ENCODE measurements at regions of chr12 and their contacts with region 1.

Region 1: DNA sequence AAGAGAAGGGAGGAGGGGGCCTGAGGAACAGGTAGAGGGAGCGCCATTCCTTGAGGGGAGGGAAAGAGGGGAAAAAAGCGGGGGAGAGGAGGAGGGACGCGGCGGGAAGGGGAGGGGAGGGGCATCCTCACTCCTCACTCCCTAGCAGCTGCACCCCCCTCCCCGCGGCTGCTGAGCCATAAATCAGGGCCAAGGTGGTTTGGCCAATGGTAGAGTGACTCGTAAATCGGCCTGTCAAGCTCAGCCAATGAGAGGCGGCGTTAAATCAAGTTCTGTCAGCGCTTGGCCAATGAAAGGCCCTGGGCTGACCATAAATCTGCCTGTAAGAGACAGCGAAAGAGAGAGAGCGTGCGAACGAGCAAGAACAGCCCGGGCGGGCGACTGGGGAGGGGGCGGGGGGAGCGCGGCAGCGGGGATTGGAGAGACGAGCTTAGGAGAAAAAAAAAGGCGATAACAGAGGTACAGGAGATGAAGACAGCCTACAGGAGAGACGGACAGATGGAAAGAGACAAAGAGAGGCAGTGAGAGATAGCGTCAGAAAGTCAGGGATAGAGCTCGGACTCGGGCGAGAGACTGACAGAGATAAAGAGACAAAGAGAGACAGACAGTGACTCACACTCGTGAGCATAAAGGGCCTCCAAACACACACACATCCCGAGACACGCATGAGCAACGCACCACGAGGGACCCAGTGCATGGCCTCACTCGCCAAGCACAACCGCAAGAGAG is 5.1 kb downstream of the GPR84 start:
- DNase-seq: peak; percentile 98
- H3K4me3 ChIP-seq: peak overlapping the region; percentile 43 to 73 (median 53)
- H3K27ac ChIP-seq: peak overlapping the region; percentile 81
- H3K4me1 ChIP-seq: peaks cover 24% of the 10 kb centered on the region
- H3K27me3 ChIP-seq: no peaks in the 10 kb centered on the region
- CTCF ChIP-seq: no peak

Region 2: GRCh38 chr12:53844989-53845844 is 514.0 kb before region 1 on chr12:
- CTCF ChIA-PET with region 1: no interaction called
- dilution Hi-C with region 1: no loop called
- in situ Hi-C with region 1: no loop called
- intact Hi-C with region 1: no loop called
- DNase-seq: peak; percentile 83
- H3K4me3 ChIP-seq: no peak overlapping the region
- H3K27ac ChIP-seq: peak overlapping the region; percentile 1
- H3K4me1 ChIP-seq: peaks cover 39% of the 10 kb centered on the region
- H3K27me3 ChIP-seq: no peaks in the 10 kb centered on the region
- CTCF ChIP-seq: no peak

Region 3: GRCh38 chr12:54220092-54220557 is 139.1 kb before region 1 on chr12:
- CTCF ChIA-PET with region 1: interaction called, 4 read pairs
- dilution Hi-C with region 1: loop called (anchors 5 kb)
- in situ Hi-C with region 1: loop called in 1 of 2 experiments (anchors 5 kb)
- intact Hi-C with region 1: loop called (anchors 1 kb)
- DNase-seq: peak; percentile 79
- H3K4me3 ChIP-seq: no peak overlapping the region
- H3K27ac ChIP-seq: no peak overlapping the region
- H3K4me1 ChIP-seq: peaks cover 44% of the 10 kb centered on the region
- H3K27me3 ChIP-seq: no peaks in the 10 kb centered on the region
- CTCF ChIP-seq: peak; percentile 79 to 86

Region 4: GRCh38 chr12:54259194-54260011 is 99.8 kb before region 1 on chr12:
- CTCF ChIA-PET with region 1: no interaction called
- dilution Hi-C with region 1: no loop called
- in situ Hi-C with region 1: no loop called
- intact Hi-C with region 1: loop called (anchors 2 kb)
- DNase-seq: peak; percentile 77
- H3K4me3 ChIP-seq: peak overlapping the region; percentile 6 to 39 (median 33)
- H3K27ac ChIP-seq: peak overlapping the region; percentile 91
- H3K4me1 ChIP-seq: peaks cover 36% of the 10 kb centered on the region
- H3K27me3 ChIP-seq: no peaks in the 10 kb centered on the region
- CTCF ChIP-seq: no peak

Region 5: DNA sequence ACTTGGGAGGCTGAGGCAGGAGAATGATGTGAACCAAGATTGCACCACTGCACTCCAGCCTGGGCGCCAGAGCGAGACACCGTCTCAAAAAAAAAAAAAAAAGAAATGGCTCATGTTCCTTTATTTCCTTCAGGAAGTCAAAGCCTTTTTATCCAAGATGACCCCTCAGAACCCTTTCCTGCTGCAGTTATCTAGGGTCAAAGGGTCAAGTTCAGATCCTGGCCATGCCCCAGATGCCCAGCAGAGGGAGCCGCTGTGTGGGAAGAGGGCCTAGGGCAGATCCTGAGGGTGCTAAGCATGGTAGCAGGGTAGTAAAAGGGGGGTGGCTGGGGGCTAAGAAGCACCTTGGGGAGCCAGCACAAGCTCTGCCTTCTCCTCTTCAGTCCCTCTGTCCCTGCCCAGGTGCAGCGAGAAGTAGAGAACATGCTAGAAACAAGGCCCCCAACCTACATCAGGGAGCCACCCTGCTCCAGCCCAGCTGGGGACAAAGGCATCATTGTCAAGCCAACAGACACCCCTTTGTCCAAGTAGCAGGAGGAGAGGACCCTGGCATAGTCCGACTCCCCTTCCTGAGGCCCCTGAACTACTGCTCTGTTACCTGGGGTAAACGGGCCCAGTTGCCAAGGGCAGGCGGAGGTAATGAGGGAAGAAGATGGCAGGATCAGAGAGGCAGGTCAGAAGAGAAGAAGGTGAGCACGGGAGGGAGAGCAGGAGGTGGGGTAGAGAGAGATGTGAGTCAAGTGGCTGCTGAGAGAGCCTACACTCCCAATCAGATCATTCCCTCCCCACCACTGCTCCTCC is 64.8 kb before region 1 on chr12:
- CTCF ChIA-PET with region 1: no interaction called
- dilution Hi-C with region 1: loop called (anchors 5 kb)
- in situ Hi-C with region 1: loop called in 1 of 2 experiments (anchors 5 kb)
- intact Hi-C with region 1: loop called (anchors 1 kb)
- DNase-seq: no peak
- H3K4me3 ChIP-seq: no peak overlapping the region
- H3K27ac ChIP-seq: no peak overlapping the region
- H3K4me1 ChIP-seq: peaks cover under 1% of the 10 kb centered on the region
- H3K27me3 ChIP-seq: no peaks in the 10 kb centered on the region
- CTCF ChIP-seq: peak; percentile 96

Region 6: GRCh38 chr12:54526812-54527630 is 167.8 kb after region 1 on chr12:
- CTCF ChIA-PET with region 1: no interaction called
- dilution Hi-C with region 1: no loop called
- in situ Hi-C with region 1: no loop called
- intact Hi-C with region 1: no loop called
- DNase-seq: peak; percentile 14
- H3K4me3 ChIP-seq: no peak overlapping the region
- H3K27ac ChIP-seq: no peak overlapping the region
- H3K4me1 ChIP-seq: no peaks in the 10 kb centered on the region
- H3K27me3 ChIP-seq: peaks cover 8% of the 10 kb centered on the region
- CTCF ChIP-seq: peak; percentile 82